ENCODE measurements at regions of chr10 and their contacts with region 1.

Region 1: DNA sequence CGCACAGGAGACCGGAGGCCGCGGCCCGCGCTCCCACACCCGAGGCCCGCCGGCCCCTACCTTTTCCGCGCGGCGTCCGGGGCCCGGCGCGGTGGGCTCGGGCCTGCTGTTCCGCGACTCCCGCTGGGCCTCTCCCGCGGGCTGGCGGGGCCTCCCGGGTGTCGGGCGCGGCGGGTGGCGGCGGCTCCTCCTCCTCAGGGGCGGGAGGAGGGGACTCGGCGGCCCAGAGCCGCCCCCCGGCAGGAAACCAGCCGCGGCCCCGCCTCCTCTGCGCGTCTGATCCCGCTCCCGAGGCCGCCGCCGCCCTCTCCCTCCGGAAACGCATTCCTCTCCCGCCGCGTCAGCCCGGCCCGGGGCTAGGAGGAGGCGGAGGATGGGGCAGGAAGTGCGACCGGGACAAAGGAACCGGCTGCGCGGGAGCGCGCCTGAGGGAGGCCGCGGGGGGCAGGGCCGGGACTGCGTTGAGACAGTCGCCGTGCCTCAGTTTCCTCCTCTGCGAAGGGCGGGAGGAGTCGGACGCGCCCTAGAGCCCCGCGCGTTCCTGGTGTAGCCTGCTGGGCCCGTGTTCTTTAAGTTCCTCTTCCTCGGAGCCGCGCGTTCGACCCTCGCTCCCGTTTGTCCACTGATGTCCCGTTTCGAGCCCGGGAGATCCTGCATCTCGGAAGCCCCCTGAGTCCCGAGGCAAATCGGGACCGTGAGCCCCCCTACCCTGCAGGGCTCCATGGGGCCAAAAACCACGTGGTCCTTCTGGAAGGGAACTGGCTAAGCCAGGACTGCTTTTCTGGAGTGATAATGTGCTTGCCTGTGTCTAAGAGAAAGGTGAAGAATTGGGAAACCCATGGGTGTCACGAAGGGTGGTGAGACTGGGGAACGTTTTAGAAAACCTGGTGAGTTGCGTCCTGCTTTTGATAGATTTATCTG is at the start of gene ITGB1:
- DNase-seq: peak; percentile 84
- H3K4me3 Mint-ChIP-seq: peak within 1 kb of the TSS; percentile 84
- H3K27ac Mint-ChIP-seq: peak within 1 kb of the TSS; percentile 89
- H3K4me1 Mint-ChIP-seq: peaks cover 40% of the 10 kb centered on the region
- H3K27me3 Mint-ChIP-seq: peaks cover 10% of the 10 kb centered on the region
- total RNA-seq, gene ITGB1: 30.3 to 34.5 TPM

Region 2: GRCh38 chr10:32378363-32379317 is 579.7 kb before region 1 on chr10:
- CTCF ChIA-PET with region 1: no interaction called
- intact Hi-C with region 1: loop called (anchors 1 kb)
- DNase-seq: peak; percentile 97
- H3K4me3 Mint-ChIP-seq: no peak overlapping the region
- H3K27ac Mint-ChIP-seq: no peak overlapping the region
- H3K4me1 Mint-ChIP-seq: peaks cover 13% of the 10 kb centered on the region
- H3K27me3 Mint-ChIP-seq: no peaks in the 10 kb centered on the region

Region 3: DNA sequence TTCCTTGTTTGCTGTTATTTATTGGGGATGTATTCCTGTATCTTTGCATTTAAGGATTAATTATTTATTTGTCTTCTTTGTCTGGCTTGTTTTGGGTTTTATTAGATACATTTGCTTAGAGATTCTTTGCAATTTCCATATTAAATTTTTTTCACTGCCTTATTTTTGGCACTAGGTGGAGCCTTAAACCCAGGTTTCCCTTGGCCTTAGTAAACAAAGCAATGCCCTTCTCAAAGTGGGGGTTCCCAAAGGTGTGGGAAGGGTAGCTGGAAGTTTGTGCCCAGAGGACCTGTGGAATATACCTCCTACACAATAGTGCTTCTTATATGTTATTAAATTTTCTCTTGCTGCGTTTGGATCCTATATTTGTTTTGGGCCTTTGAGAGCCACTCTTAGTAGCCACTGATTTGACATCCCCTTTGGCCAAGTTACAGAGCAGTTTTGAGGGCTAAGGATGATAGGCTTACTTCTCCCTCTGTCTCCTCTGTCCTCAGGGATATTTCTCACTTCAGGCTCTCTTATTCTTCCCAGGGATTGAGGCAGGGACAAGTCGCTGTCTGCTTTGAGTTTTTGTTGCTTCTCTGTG is 162.7 kb before region 1 on chr10:
- CTCF ChIA-PET with region 1: no interaction called
- intact Hi-C with region 1: loop called (anchors 5 kb)
- DNase-seq: peak; percentile 17
- H3K4me3 Mint-ChIP-seq: no peak overlapping the region
- H3K27ac Mint-ChIP-seq: no peak overlapping the region
- H3K4me1 Mint-ChIP-seq: no peaks in the 10 kb centered on the region
- H3K27me3 Mint-ChIP-seq: no peaks in the 10 kb centered on the region

Region 4: DNA sequence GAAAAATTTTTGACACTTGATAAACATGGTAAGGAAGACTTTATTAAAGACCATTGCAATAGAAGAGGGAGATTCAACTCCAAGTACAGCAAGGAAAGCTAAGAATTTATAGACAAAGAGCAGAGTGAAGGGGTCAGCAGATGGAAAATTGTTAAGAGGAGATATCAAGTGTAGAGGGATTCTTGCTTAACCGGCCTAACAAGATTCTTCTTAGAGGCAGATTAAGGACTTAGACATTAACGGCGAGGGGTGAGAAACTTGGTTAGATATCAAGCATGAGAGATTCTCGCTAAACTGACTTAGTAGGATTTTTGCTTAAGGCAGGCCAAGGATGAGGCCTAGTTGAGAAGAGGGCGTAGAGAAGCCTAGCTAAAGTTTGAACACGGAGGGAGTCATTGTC is 76.3 kb before region 1 on chr10:
- CTCF ChIA-PET with region 1: no interaction called
- intact Hi-C with region 1: no loop called
- DNase-seq: no peak
- H3K4me3 Mint-ChIP-seq: no peak overlapping the region
- H3K27ac Mint-ChIP-seq: no peak overlapping the region
- H3K4me1 Mint-ChIP-seq: peaks cover 3% of the 10 kb centered on the region
- H3K27me3 Mint-ChIP-seq: no peaks in the 10 kb centered on the region

Region 5: DNA sequence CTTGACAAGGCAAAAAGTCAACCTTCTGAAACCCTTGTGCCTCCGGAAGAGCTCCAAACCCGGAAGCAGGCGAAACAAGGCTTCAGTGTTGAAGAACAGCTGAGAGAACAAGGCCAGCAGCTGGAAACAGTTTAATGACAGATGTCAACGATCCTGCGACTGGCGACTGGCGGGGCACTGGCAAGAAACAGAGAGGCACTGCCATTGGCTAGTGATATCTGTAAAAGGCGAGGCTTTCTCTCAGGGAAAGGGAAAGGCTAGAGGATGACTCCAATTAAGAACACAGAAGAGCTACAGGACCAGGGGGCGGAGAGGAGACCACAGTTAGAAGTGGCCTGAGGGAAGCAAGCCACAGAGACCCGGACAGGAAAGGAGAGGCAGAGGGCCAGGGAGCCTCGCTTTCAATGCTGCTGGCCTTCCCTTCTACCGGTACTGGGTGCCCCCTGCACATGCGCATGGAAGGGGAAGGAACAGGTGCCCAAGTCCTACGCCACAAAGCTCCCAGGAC is 19.7 kb before region 1 on chr10:
- CTCF ChIA-PET with region 1: no interaction called
- intact Hi-C with region 1: no loop called
- DNase-seq: no peak
- H3K4me3 Mint-ChIP-seq: no peak overlapping the region
- H3K27ac Mint-ChIP-seq: no peak overlapping the region
- H3K4me1 Mint-ChIP-seq: peaks cover 17% of the 10 kb centered on the region
- H3K27me3 Mint-ChIP-seq: no peaks in the 10 kb centered on the region

Region 6: GRCh38 chr10:33015761-33016547 is 57.6 kb after region 1 on chr10:
- CTCF ChIA-PET with region 1: no interaction called
- intact Hi-C with region 1: no loop called
- DNase-seq: no peak
- H3K4me3 Mint-ChIP-seq: no peak overlapping the region
- H3K27ac Mint-ChIP-seq: no peak overlapping the region
- H3K4me1 Mint-ChIP-seq: no peaks in the 10 kb centered on the region
- H3K27me3 Mint-ChIP-seq: no peaks in the 10 kb centered on the region

Region 7: GRCh38 chr10:33143160-33143728 is 184.9 kb after region 1 on chr10:
- CTCF ChIA-PET with region 1: no interaction called
- intact Hi-C with region 1: loop called (anchors 1 kb)
- DNase-seq: peak; percentile 82
- H3K4me3 Mint-ChIP-seq: no peak overlapping the region
- H3K27ac Mint-ChIP-seq: peak overlapping the region; percentile 50
- H3K4me1 Mint-ChIP-seq: peaks cover 52% of the 10 kb centered on the region
- H3K27me3 Mint-ChIP-seq: no peaks in the 10 kb centered on the region

Region 8: GRCh38 chr10:33365871-33366411 is 407.6 kb after region 1 on chr10:
- CTCF ChIA-PET with region 1: no interaction called
- intact Hi-C with region 1: loop called (anchors 1 kb)
- DNase-seq: peak; percentile 53
- H3K4me3 Mint-ChIP-seq: no peak overlapping the region
- H3K27ac Mint-ChIP-seq: no peak overlapping the region
- H3K4me1 Mint-ChIP-seq: peaks cover 18% of the 10 kb centered on the region
- H3K27me3 Mint-ChIP-seq: peaks cover 22% of the 10 kb centered on the region

Measured in activated naive CD4-positive, alpha-beta T cell treated with anti-CD3 and anti-CD28 coated beads for 36 hours (primary cell).